H1 (cell line): ENCODE measurements at regions of chr5 and their contacts with region 1.

Region 1: GRCh38 chr5:150398722-150399523 is 13.8 kb downstream of the CD74 start:
- DNase-seq: no peak
- H3K4me3 ChIP-seq: no peak overlapping the region
- H3K27ac ChIP-seq: no peak overlapping the region; the same call in 1 of the 2 replicates
- H3K4me1 ChIP-seq: no peaks in the 10 kb centered on the region
- H3K27me3 ChIP-seq: no peaks in the 10 kb centered on the region
- CTCF ChIP-seq: peak in 2 of 3 experiments; percentile 58 to 65; a peak in 3 of 4 replicates
- EP300 ChIP-seq: no peak
- POLR2A ChIP-seq: no peak
- RAD21 ChIP-seq: peak in 1 of 2 experiments; percentile 29; a peak in 2 of 4 replicates

Region 2: GRCh38 chr5:150357326-150358260 is 41.3 kb before region 1 on chr5 and contains the start of gene TCOF1:
- CTCF ChIA-PET with region 1: interaction called, 20 read pairs
- POLR2A ChIA-PET with region 1: interaction called, 455 read pairs
- DNase-seq: peak; percentile 91 to 98
- H3K4me3 ChIP-seq: peak within 1 kb of the TSS; percentile 91 to 99 (median 96)
- H3K27ac ChIP-seq: peak within 1 kb of the TSS; percentile 73
- H3K4me1 ChIP-seq: peaks cover 0 to 7% (median 2%) of the 10 kb centered on the region in 4 experiments; a peak in 4 of 7 replicates
- H3K27me3 ChIP-seq: no peaks in the 10 kb centered on the region
- CTCF ChIP-seq: no peak
- EP300 ChIP-seq: no peak
- POLR2A ChIP-seq: peak; percentile 74 to 82
- RAD21 ChIP-seq: no peak
- total RNA-seq, gene TCOF1: 158 and 170 TPM in 2 replicates

Region 3: DNA sequence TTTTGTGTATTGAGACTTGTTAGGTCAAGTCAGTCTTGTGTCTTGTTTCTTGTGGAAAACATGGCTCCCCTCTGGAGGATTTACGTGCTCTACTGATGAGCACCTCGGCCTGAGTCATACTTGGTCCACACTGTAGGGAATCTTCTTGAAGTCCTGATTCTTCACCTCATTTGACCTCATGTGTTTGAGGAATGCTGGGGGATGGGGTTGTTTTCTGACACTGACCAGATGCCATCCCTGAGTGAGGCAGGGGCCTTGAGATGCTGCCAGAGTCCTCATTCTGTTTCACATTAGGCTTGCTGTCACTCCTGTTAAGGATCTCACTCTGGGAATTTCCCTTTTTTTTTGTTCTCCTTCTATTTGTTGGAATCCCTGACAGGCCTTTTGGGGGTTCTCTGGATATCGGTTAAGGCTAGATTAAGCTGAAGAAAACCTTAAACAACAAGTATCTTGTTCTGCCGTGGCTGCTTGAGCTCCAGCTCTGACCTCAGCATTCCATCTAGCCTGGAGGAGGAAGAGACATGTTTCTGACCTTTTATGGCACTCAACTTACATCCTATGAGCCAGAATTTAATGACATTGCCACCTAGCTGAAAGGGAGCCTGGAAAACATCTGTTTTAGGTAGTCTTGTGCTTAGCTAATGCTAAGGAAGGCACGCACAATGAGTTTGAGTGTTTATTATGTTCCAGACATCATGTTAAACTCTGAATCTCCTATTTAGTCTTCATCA is 20.8 kb before region 1 on chr5:
- CTCF ChIA-PET with region 1: interaction called, 274 read pairs
- POLR2A ChIA-PET with region 1: interaction called, 455 read pairs
- DNase-seq: no peak
- H3K4me3 ChIP-seq: no peak overlapping the region
- H3K27ac ChIP-seq: no peak overlapping the region
- H3K4me1 ChIP-seq: no peaks in the 10 kb centered on the region
- H3K27me3 ChIP-seq: no peaks in the 10 kb centered on the region
- CTCF ChIP-seq: no peak
- EP300 ChIP-seq: no peak
- POLR2A ChIP-seq: no peak
- RAD21 ChIP-seq: no peak

Region 4: DNA sequence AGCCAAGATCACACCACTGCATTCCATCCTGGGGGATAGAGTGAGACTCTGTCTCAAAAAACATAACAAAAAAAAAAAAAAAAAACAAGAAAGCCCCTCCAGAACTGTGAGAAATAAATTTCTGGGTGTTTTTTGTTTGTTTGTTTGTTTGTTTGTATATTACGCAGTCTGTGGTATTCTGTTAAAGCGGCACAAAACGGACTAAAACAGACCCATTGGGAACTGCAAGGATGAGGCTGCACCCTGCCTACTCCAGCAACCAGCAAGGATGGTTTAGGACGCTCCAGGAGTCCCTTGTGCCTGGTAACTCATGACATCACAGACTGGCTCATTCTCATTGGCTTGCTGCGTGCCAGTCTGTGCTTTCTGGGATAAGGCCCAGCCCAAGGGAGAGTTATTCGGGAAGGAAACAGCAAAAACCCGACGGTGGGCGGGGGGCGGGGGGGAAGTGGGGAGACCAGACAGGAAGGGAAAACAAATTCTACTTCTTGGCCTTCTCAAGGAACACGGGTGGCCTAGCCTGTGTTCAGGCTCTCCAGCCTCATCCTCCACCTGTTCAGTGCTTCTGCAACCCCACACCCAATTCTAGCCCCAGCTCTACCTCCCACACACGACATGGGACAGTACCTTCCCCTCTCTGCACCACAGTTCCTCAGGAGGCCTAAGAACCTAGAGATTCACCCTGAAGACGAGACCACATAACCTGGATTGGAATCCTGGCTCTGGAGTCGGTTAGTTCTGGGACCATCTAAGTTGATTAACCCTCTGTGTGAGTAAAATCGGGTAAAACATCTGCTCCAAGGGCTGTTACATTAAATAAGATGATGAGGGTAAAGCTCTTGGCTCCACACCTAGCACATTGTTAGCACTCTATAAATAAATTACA is 11.0 kb after region 1 on chr5:
- CTCF ChIA-PET with region 1: interaction called, 43 read pairs
- POLR2A ChIA-PET with region 1: interaction called, 31 read pairs
- DNase-seq: peak; percentile 44 to 80
- H3K4me3 ChIP-seq: peak overlapping the region; percentile 9 to 37 (median 29); a peak in 6 of 8 replicates
- H3K27ac ChIP-seq: no peak overlapping the region
- H3K4me1 ChIP-seq: peaks cover 8 to 27% (median 13%) of the 10 kb centered on the region in 4 experiments
- H3K27me3 ChIP-seq: no peaks in the 10 kb centered on the region
- CTCF ChIP-seq: no peak
- EP300 ChIP-seq: no peak
- POLR2A ChIP-seq: no peak
- RAD21 ChIP-seq: no peak

Region 5: GRCh38 chr5:150419630-150420270 is 20.8 kb after region 1 on chr5:
- CTCF ChIA-PET with region 1: interaction called, 48 read pairs
- POLR2A ChIA-PET with region 1: interaction called, 4 read pairs
- DNase-seq: no peak
- H3K4me3 ChIP-seq: no peak overlapping the region
- H3K27ac ChIP-seq: no peak overlapping the region
- H3K4me1 ChIP-seq: no peaks in the 10 kb centered on the region
- H3K27me3 ChIP-seq: no peaks in the 10 kb centered on the region; a peak in 1 of 7 replicates
- CTCF ChIP-seq: no peak
- EP300 ChIP-seq: no peak
- POLR2A ChIP-seq: no peak
- RAD21 ChIP-seq: no peak

Region 6: GRCh38 chr5:150436141-150436680 is 37.3 kb after region 1 on chr5:
- CTCF ChIA-PET with region 1: interaction called, 245 read pairs
- POLR2A ChIA-PET with region 1: interaction called, 12 read pairs
- DNase-seq: peak; percentile 75 to 97
- H3K4me3 ChIP-seq: no peak overlapping the region
- H3K27ac ChIP-seq: no peak overlapping the region
- H3K4me1 ChIP-seq: peaks cover 0 to 4% (median 1%) of the 10 kb centered on the region in 4 experiments; a peak in 2 of 7 replicates
- H3K27me3 ChIP-seq: no peaks in the 10 kb centered on the region
- CTCF ChIP-seq: peak; percentile 85 to 93 (median 88)
- EP300 ChIP-seq: no peak
- POLR2A ChIP-seq: no peak
- RAD21 ChIP-seq: peak; percentile 88 to 90

Region 7: DNA sequence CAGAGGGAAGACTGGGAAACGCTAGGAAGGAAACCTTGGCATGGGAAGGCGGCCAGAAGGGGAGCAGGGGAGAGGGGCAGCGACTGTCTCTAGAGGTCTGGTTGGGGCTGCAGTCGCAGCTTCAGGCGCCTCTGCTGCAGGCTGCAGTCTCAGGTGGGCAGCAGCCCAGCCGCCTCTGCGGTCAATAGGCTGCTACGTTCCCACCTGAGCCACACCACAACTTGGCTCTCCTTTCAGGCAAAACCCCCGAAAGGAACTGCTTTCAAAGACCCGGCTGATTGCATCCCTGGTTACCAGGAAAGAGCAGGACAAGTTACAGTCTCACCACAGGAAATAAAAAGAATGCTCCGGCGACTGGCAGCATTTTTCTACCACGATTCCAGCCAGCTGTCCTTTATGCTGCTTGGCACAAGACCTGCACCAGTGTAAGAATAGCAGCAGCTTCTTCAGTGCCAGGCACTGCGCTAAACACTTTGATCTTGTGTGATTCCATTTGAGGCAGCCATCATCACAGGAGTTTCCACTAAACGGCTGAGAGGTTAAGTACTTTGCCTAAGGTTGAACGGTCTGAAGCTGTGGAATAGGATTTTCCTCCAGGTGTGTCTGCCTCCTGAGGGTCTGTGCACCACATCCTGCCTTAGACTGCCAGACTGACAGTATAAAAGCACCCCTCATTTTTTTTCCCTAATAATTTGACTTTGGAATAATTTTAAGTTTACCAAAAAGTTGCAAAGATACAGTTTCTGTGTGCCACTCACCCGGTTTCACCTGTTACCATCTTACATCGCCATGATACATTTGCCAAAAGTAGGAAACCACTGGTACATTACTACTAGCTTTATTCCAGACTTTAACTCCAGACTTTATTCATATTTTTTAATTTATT is 43.1 kb after region 1 on chr5:
- CTCF ChIA-PET with region 1: interaction called, 245 read pairs
- POLR2A ChIA-PET with region 1: interaction called, 30 read pairs
- DNase-seq: peak in 1 of 2 experiments; percentile 60
- H3K4me3 ChIP-seq: no peak overlapping the region
- H3K27ac ChIP-seq: peak overlapping the region; percentile 8; the same call in 1 of the 2 replicates
- H3K4me1 ChIP-seq: peaks cover 0 to 7% (median 2%) of the 10 kb centered on the region in 4 experiments; a peak in 5 of 7 replicates
- H3K27me3 ChIP-seq: no peaks in the 10 kb centered on the region
- CTCF ChIP-seq: no peak
- EP300 ChIP-seq: no peak
- POLR2A ChIP-seq: peak in 1 of 2 experiments; percentile 60; a peak in 2 of 3 replicates
- RAD21 ChIP-seq: no peak

Region 8: DNA sequence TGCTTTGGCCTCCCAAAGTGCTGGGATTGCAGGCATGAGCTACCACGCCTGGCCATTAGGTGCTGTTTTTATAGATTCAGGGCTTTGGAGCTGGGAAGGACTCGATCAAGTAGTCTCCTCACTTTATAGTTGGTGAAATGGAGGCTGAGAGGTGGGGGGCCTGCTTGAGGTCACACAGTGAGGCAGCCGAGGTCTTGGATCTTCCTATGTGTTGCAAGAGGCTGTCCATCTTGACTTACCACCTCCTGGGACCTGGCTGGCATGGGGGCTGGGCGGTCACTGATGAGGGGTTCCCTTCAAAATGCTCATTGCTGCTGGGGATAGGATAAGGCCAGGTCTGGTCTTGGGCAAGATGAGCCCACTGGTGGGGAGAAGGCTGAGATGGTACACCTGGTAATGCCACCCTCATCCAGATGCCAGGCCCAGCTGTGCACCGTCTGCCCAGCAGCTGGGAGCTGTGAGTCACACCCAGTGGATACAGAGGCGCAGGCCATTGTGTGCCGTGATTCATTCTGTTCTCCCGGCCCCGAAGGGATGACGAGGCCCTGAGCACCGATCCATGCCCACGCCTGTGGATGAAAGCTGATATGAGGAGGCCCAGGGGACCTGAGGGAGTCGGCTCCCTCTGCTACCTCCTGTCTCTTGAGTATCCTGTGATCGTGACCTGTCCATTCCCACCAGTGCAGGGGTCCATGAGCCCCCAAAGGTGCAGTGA is 98.5 kb after region 1 on chr5:
- CTCF ChIA-PET with region 1: no interaction called
- POLR2A ChIA-PET with region 1: no interaction called
- DNase-seq: no peak
- H3K4me3 ChIP-seq: no peak overlapping the region
- H3K27ac ChIP-seq: peak overlapping the region; percentile 25; the same call in 1 of the 2 replicates
- H3K4me1 ChIP-seq: peaks cover 21 to 28% (median 27%) of the 10 kb centered on the region in 4 experiments
- H3K27me3 ChIP-seq: no peaks in the 10 kb centered on the region
- CTCF ChIP-seq: no peak
- EP300 ChIP-seq: no peak
- POLR2A ChIP-seq: no peak
- RAD21 ChIP-seq: no peak

Region 9: GRCh38 chr5:150556859-150557498 is 158.1 kb after region 1 on chr5:
- CTCF ChIA-PET with region 1: no interaction called
- POLR2A ChIA-PET with region 1: no interaction called
- DNase-seq: no peak
- H3K4me3 ChIP-seq: no peak overlapping the region
- H3K27ac ChIP-seq: no peak overlapping the region
- H3K4me1 ChIP-seq: peaks cover 2 to 9% (median 4%) of the 10 kb centered on the region in 4 experiments
- H3K27me3 ChIP-seq: no peaks in the 10 kb centered on the region
- CTCF ChIP-seq: no peak
- EP300 ChIP-seq: no peak
- POLR2A ChIP-seq: no peak
- RAD21 ChIP-seq: no peak